Pancreas (tissue), 10 donors: ENCODE measurements at regions of chr6 and their contacts with region 1.

Region 1: DNA sequence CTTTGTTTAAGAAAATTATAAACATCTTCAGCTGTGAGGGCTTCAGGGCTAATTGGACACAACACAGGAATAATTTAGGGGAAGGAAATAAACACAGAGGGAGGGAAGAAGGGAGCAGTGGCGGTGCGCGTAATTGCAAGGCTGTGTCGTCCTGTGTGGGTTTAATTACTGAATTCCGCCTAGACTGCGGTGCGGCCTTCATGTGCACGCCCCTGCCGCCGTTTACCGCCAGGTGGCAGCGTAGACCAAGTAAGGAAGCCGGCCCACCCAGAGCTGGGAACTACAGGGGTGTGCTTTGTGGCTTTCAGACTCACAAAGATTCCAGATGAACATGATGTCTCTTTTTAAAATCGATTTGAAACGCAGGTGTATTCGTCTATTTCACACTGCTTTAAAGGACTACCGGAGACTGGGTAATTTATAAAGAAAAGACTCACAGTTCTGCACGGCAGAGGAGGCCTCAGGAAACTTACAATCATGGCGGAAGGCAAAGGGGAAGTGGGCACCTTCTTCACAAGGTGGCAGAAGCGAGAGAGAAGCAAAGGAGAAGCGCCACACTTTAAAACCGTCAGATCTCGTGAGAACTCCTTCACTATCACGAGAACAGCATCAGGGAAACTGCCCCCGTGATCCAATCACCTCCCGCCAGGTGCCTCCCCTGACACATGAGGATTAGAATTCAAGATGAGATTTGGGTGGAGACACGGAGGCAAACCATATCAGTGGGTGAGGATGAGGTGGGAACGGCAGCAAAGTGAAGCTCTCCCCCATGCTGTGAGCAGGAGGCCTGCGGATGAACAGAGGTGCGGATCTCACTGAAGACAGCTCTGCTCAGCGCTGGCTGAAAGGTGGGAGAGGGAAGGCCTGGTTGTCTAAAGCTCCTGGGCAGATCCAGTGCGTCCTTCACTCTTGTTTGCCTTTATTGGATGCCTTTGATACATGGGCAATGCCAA is 222.0 kb upstream of the PDE10A start:
- DNase-seq: peak in 5 of 6 donors; percentile 44 to 90 (median 70)
- ATAC-seq: peak; percentile 84 to 98 (median 95)
- H3K4me3 ChIP-seq: no peak overlapping the region
- H3K27ac ChIP-seq: no peak overlapping the region
- H3K4me1 ChIP-seq: no peaks in the 10 kb centered on the region
- H3K27me3 ChIP-seq: no peaks in the 10 kb centered on the region
- CTCF ChIP-seq: peak; percentile 64 to 88 (median 82)

Region 2: DNA sequence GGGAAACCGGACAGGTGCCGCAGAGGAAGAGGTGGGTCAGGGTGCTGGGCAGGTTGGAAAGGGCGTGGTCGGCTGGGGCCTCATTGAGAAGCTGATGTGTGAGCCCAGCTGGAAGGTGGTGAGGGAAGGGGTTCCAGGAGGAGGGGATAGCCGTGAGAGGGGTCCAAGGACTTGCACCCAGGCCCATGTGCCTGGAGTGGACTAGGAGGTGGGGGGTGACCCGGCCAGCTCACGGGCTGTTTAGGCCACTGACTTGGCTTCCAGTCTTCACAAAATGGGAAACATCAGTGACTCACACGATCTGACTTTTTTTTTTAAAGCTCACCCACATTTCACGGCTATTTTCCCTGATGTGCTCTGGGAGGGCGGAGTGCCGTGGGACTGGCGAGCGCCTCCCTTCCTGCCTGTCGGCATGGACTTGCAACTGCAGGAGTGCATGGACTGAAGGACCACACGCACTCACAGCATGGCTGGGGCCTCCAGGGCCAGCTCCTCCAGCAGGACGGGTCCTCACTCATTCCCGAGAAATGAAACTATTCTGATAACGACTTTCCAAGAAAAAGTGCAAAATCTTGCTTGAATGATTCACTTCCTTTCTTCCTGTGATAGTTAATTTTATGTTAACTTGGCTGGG is 208.5 kb before region 1 on chr6:
- intact Hi-C with region 1: no loop called
- DNase-seq: no peak
- ATAC-seq: peak in 2 of 4 donors; percentile 32 to 41
- H3K4me3 ChIP-seq: no peak overlapping the region
- H3K27ac ChIP-seq: no peak overlapping the region
- H3K4me1 ChIP-seq: no peaks in the 10 kb centered on the region
- H3K27me3 ChIP-seq: no peaks in the 10 kb centered on the region
- CTCF ChIP-seq: no peak

Region 3: GRCh38 chr6:166087246-166087645 is 202.2 kb after region 1 on chr6:
- intact Hi-C with region 1: loop called in 1 of 3 experiments (anchors 5 kb)
- DNase-seq: no peak
- ATAC-seq: peak in 1 of 4 donors; percentile 28
- H3K4me3 ChIP-seq: no peak overlapping the region
- H3K27ac ChIP-seq: no peak overlapping the region
- H3K4me1 ChIP-seq: no peaks in the 10 kb centered on the region
- H3K27me3 ChIP-seq: no peaks in the 10 kb centered on the region
- CTCF ChIP-seq: no peak

Region 4: GRCh38 chr6:166097915-166098522 is 212.9 kb after region 1 on chr6:
- intact Hi-C with region 1: loop called (anchors 2 to 10 kb)
- DNase-seq: peak; percentile 55 to 89 (median 71)
- ATAC-seq: peak; percentile 97 to 100 (median 99)
- H3K4me3 ChIP-seq: peak overlapping the region in 2 of 4 donors; percentile 35 to 40
- H3K27ac ChIP-seq: no peak overlapping the region
- H3K4me1 ChIP-seq: no peaks in the 10 kb centered on the region
- H3K27me3 ChIP-seq: peaks cover 0 to 2% (median 0%) of the 10 kb centered on the region in 4 donors
- CTCF ChIP-seq: peak; percentile 80 to 92 (median 89)

Region 5: DNA sequence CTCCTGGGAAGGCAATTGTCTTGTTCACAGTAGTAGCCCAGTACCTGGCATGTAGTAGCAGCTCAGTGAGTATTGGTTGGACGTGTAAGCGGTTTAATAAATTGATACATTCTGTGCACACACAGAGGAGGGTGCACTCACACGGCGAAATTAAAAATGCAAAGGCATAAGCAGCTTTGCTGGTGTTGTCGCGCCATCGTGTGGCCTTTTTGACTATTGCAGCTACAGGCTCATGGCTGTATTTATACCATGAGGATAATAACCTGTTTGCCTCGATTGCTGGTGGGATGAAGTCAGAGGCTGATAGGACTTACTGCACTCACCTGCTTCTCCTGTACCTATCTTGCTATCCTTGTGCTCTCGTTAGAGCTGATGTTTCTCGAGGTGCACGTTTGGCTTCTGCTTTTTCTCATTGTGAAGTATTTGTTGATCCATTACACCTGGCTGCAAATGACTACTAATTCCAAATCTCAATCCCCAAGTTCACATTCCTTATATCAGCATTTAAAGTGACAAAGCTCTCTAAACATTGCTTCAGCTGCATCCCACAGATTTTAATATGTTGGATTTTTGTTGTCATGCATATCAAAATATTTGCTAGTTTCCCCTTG is 221.1 kb after region 1 on chr6:
- intact Hi-C with region 1: loop called (anchors 2 to 10 kb)
- DNase-seq: peak; percentile 38 to 90 (median 76)
- ATAC-seq: peak; percentile 63 to 91 (median 89)
- H3K4me3 ChIP-seq: no peak overlapping the region
- H3K27ac ChIP-seq: no peak overlapping the region
- H3K4me1 ChIP-seq: no peaks in the 10 kb centered on the region
- H3K27me3 ChIP-seq: peaks cover 0 to 11% (median 0%) of the 10 kb centered on the region in 4 donors
- CTCF ChIP-seq: peak; percentile 64 to 84 (median 76)

Region 6: GRCh38 chr6:166145751-166146150 is 260.7 kb after region 1 on chr6:
- intact Hi-C with region 1: no loop called
- DNase-seq: no peak
- ATAC-seq: no peak
- H3K4me3 ChIP-seq: no peak overlapping the region
- H3K27ac ChIP-seq: no peak overlapping the region
- H3K4me1 ChIP-seq: no peaks in the 10 kb centered on the region
- H3K27me3 ChIP-seq: no peaks in the 10 kb centered on the region
- CTCF ChIP-seq: no peak